Activated CD4-positive, alpha-beta T cell treated with anti-CD3 and anti-CD28 coated beads for 36 hours (primary cell): ENCODE measurements at regions of chr11 and their contacts with region 1.

Region 1: DNA sequence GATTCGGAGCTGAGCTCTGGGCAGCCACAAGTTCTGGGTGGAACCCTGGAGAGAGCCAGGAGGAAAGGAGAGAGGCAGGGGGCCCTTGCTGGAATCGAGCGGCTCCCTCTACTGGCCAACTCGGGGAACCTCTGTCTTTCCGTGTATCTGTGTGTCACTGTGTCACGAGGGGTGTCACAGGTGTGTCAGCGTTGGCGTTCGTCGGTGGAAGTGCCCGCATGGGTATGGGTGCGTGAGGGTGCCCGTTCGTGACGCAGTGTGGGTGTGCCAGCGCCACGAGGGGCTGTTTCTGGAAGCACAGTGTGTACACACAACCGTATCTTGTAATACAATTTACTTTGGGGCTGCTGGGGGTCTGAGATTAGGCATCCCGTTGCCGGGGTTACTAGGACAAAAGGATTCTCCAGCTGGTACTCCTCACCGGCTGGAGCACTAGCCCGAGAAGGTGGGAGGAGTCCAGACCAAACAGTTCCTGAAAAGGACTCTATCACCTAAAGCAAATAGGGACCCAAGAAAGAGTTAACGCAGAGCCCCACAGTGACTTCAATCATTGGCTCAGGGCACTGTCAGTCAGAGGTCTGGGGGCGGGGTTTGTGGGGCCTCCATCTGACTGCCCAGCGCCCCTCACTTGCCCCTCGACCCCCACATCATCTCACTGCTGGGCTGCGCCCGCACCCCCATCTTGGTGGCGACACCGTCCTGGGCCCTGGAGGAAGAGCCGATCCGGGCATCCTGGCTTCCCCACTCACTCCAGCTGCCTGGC is 2.6 kb upstream of the BCL9L start:
- DNase-seq: peak; percentile 95
- ATAC-seq: peak; percentile 51
- H3K4me3 Mint-ChIP-seq: peak overlapping the region; percentile 86
- H3K27ac Mint-ChIP-seq: peak overlapping the region; percentile 97
- H3K4me1 Mint-ChIP-seq: peaks cover 42% of the 10 kb centered on the region
- H3K27me3 Mint-ChIP-seq: no peaks in the 10 kb centered on the region

Region 2: GRCh38 chr11:118401151-118401878 is 527.0 kb before region 1 on chr11 and contains the start of gene ATP5MG:
- CTCF ChIA-PET with region 1: no interaction called
- POLR2A ChIA-PET with region 1: no interaction called
- intact Hi-C with region 1: loop called in 1 of 2 experiments (anchors 5 kb)
- DNase-seq: peak; percentile 96
- ATAC-seq: peak; percentile 63
- H3K4me3 Mint-ChIP-seq: peak within 1 kb of the TSS; percentile 93
- H3K27ac Mint-ChIP-seq: peak within 1 kb of the TSS; percentile 100
- H3K4me1 Mint-ChIP-seq: peaks cover 64% of the 10 kb centered on the region
- H3K27me3 Mint-ChIP-seq: no peaks in the 10 kb centered on the region
- total RNA-seq, gene ATP5MG: 136 to 229 TPM

Region 3: GRCh38 chr11:118715245-118715831 is 213.0 kb before region 1 on chr11:
- CTCF ChIA-PET with region 1: no interaction called
- POLR2A ChIA-PET with region 1: no interaction called
- intact Hi-C with region 1: no loop called
- DNase-seq: no peak
- ATAC-seq: no peak
- H3K4me3 Mint-ChIP-seq: no peak overlapping the region
- H3K27ac Mint-ChIP-seq: no peak overlapping the region
- H3K4me1 Mint-ChIP-seq: peaks cover 6% of the 10 kb centered on the region
- H3K27me3 Mint-ChIP-seq: no peaks in the 10 kb centered on the region

Region 4: GRCh38 chr11:118883368-118884071 is 44.8 kb before region 1 on chr11 and contains the start of gene CXCR5:
- CTCF ChIA-PET with region 1: interaction called, 8 read pairs
- POLR2A ChIA-PET with region 1: interaction called, 4 read pairs
- intact Hi-C with region 1: loop called (anchors 1 to 2 kb)
- DNase-seq: peak; percentile 80
- ATAC-seq: peak; percentile 68
- H3K4me3 Mint-ChIP-seq: peak within 1 kb of the TSS; percentile 75
- H3K27ac Mint-ChIP-seq: peak within 1 kb of the TSS; percentile 90
- H3K4me1 Mint-ChIP-seq: peaks cover 80% of the 10 kb centered on the region
- H3K27me3 Mint-ChIP-seq: no peaks in the 10 kb centered on the region
- total RNA-seq, gene CXCR5: 18.9 to 21.3 TPM

Region 5: DNA sequence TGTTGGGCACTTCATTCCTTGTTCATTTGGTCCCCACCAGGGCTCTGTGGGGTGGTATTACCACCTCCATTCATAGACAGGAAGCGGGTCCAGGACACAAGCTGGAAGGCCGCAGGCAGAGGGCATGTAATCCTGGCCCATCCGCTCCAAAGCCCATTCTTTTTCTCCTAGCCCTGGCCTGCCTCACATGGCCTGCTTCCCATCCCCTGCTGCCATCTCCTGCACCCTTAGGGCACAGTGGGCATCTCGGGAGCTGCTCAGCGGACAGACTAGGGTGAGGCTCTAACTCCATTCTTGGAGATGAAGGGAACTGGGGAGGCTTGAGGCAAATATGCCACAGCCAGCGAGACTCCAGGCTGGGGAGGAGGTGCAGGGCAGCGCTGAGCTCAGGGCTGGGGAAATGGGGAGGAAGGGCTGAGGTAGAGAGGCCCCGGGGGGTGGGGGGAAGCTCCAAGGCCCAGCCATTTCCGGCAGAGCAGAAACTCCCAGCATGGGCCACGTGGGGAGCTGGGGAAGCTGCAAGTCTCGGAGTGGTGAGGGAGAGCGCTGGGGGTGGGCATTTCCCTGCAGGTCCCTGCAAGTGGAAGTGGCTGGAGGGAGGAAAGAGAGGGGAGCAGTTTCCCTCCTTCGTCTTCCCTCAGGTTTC is 11.8 kb after region 1 on chr11:
- CTCF ChIA-PET with region 1: interaction called, 24 read pairs
- POLR2A ChIA-PET with region 1: interaction called, 9 read pairs
- intact Hi-C with region 1: loop called in 1 of 2 experiments (anchors 1 kb)
- DNase-seq: peak; percentile 82
- ATAC-seq: peak; percentile 94
- H3K4me3 Mint-ChIP-seq: peak overlapping the region; percentile 51
- H3K27ac Mint-ChIP-seq: peak overlapping the region; percentile 80
- H3K4me1 Mint-ChIP-seq: peaks cover 39% of the 10 kb centered on the region
- H3K27me3 Mint-ChIP-seq: no peaks in the 10 kb centered on the region

Region 6: DNA sequence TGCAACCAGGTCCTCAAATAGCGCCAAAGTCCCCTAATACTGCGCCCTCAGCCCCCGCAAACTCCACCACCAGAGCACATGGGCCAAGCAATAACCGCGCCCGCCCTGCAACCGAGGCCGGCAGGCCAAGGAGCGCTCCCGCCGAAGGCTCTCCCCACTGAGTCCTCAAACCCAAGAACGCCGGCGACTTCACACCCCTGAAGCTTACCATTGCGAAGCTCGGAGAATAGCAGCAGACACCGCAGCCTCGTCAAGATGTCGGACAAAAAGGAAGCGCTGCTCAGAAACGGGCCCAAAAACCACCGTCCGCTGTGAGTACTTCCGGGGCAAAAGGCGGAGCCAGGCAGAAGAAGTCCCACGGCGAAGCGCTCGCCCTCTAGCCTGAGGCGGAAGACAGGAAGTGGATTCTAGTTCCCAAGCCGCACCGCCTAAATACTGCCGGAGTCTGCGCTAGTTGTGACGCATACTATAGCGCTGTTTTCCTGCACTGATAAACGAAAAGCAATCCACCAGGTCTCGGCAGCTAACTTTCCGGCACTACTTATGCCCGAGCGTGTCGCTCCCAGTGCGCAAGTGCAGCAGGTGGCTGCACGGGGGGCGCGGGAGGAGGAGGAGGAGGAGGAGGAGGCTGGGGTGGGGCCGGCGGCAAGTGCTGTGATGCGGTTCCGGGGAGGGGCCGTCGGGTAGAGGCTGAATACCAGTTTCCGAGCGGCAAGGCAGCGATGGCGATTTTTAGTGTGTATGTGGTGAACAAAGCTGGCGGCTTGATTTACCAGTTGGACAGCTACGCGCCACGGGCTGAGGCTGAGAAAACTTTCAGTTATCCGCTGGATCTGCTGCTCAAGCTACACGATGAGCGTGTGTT is 90.0 kb after region 1 on chr11 and contains the starts of genes RPS25 and TRAPPC4:
- CTCF ChIA-PET with region 1: interaction called, 4 read pairs
- POLR2A ChIA-PET with region 1: no interaction called
- intact Hi-C with region 1: loop called (anchors 1 to 5 kb)
- DNase-seq: peak; percentile 98
- ATAC-seq: peak; percentile 92
- H3K4me3 Mint-ChIP-seq: peak within 1 kb of the TSS; percentile 99
- H3K27ac Mint-ChIP-seq: peak within 1 kb of the TSS; percentile 99
- H3K4me1 Mint-ChIP-seq: peaks cover 53% of the 10 kb centered on the region
- H3K27me3 Mint-ChIP-seq: no peaks in the 10 kb centered on the region
- total RNA-seq, gene RPS25: 1,590 to 1,820 TPM
- total RNA-seq, gene TRAPPC4: 62.2 to 81.9 TPM

Region 7: GRCh38 chr11:119095066-119095880 is 167.0 kb after region 1 on chr11:
- CTCF ChIA-PET with region 1: no interaction called
- POLR2A ChIA-PET with region 1: interaction called, 3 read pairs
- intact Hi-C with region 1: loop called in 1 of 2 experiments (anchors 2 kb)
- DNase-seq: peak; percentile 100
- ATAC-seq: peak; percentile 90
- H3K4me3 Mint-ChIP-seq: peak overlapping the region; percentile 93
- H3K27ac Mint-ChIP-seq: peak overlapping the region; percentile 94
- H3K4me1 Mint-ChIP-seq: peaks cover 50% of the 10 kb centered on the region
- H3K27me3 Mint-ChIP-seq: no peaks in the 10 kb centered on the region

Region 8: GRCh38 chr11:119284344-119285157 is 356.3 kb after region 1 on chr11:
- CTCF ChIA-PET with region 1: no interaction called
- POLR2A ChIA-PET with region 1: no interaction called
- intact Hi-C with region 1: no loop called
- DNase-seq: no peak
- ATAC-seq: peak; percentile 94
- H3K4me3 Mint-ChIP-seq: no peak overlapping the region
- H3K27ac Mint-ChIP-seq: peak overlapping the region; percentile 47
- H3K4me1 Mint-ChIP-seq: peaks cover 19% of the 10 kb centered on the region
- H3K27me3 Mint-ChIP-seq: no peaks in the 10 kb centered on the region